Left ventricle myocardium inferior (tissue), 1 donor: ENCODE measurements at regions of chr3 and their contacts with region 1.

Region 1: DNA sequence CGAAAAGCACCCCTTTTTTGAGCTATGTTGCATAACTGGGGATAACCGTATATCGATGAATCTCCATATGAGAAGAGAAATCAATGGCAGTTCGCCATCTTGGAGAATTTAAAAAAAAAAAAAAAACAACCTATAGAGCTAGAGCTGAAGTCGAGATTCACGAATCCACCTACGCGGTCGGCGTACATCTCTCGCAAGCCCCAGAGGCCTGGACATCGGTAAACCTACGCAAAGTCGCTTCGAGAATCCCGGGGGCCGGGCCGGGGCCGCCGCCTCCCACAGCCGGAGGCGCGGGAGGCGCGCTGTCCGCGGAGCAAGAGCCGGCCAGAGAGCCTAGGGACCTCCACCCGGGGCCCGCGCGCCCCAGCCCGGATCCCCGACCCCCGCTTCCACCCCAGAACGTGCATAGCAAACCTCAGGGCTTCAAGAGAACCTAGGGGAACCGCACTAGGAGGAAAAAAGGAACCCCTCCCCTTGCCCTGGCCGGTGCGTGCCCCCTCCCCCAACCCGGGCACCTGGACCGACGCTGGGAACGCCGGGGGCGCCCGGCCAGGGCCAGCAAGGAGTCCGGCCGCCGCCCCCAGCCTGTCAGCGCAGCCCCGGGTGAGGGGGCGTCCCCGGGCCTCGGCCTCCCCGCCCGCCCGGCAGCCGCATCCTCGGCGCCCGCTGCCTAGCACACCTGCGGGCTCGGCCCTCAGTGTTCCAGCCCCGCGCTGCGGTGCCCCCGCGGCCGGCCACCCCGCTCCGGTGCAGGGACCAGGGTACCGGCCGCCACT is 567 bp downstream of the PFN2 start:
- DNase-seq: peak; percentile 84
- H3K4me3 ChIP-seq: peak overlapping the region; percentile 95
- H3K27ac ChIP-seq: peak overlapping the region; percentile 96
- H3K4me1 ChIP-seq: peaks cover 65% of the 10 kb centered on the region
- H3K27me3 ChIP-seq: no peaks in the 10 kb centered on the region
- CTCF ChIP-seq: no peak

Region 2: DNA sequence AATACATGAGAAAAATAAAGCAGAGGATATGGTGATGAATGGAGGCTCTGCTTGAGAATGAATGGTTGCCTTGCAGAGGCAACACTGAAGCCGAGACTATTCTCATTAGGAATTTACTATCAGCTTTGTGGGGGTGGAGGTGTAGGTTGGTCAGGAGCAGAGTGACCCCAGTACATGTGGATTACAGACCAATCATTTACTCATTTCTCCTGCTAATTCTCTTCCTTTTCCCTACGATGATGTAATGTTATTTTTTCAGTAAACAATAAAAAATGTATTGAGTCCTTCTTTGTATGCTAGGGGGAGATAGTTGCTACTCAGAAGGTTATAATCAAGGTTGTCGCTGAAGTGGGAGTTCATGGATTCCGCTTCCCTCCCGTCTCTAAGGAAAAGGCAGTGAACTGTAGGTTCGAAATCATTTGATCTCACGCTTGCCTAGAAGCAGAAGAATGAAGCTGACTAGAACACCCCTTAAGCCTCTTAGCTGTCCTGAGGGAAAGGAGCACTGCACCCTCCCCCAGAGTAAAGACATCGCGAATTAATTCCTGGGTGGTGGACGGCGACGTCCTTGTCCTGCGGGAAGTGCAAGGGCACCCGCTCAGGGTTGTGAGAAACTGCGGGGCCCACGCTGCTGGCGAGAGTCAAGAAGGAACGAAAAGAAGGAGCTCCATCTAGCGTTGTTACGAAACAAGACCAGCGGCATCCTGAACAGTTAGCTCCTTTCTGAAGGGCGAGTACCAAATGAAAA is 213.7 kb after region 1 on chr3:
- intact Hi-C with region 1: loop called (anchors 5 kb)
- DNase-seq: peak; percentile 62
- H3K4me3 ChIP-seq: peak overlapping the region; percentile 60
- H3K27ac ChIP-seq: peak overlapping the region; percentile 43
- H3K4me1 ChIP-seq: peaks cover 16% of the 10 kb centered on the region
- H3K27me3 ChIP-seq: no peaks in the 10 kb centered on the region
- CTCF ChIP-seq: peak; percentile 74

Region 3: DNA sequence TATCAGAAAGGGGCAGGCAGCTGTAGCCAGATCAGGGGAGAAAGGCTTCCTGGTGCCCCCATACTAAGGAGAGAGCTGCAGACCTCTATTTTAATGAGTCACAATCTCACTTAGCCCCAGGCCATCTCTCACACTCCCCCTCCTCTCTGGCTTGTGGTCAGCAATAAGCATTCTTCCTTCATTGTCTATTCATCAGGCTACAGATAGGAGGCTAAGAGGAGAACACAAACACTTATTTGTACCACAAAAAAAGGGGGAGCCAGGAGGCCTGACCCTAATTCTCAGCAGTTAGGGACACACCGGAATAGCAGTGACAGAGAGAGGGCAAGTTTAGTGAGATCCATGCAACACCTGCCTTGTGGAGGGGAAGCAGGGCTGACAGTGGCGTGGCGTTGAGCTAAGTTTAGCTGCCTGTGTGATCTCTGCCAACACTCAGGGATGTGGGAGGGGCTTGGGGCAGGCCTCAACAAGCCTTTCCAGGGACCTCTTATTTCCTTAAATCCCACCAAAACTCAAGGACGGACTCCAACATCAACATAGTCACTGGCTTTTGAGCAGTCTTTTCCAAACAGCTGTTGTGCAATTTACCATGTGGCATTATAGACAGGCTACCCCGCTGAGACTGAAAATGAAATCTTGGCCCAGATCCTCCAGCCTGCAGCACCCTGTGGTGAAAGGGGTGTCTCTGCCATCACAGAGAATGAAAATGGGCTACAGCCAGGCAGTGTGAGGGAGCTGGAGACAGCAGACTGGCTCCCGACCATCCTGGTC is 246.1 kb after region 1 on chr3:
- intact Hi-C with region 1: loop called (anchors 10 kb)
- DNase-seq: peak; percentile 59
- H3K4me3 ChIP-seq: no peak overlapping the region
- H3K27ac ChIP-seq: peak overlapping the region; percentile 54
- H3K4me1 ChIP-seq: peaks cover 22% of the 10 kb centered on the region
- H3K27me3 ChIP-seq: no peaks in the 10 kb centered on the region
- CTCF ChIP-seq: no peak